ENCODE measurements at regions of chrX and their contacts with region 1.

Region 1: GRCh38 chrX:76454456-76454927 is 27.0 kb downstream of the MAGEE1 start:
- DNase-seq: no peak
- H3K4me3 ChIP-seq: no peak overlapping the region
- H3K27me3 ChIP-seq: no peaks in the 10 kb centered on the region
- CTCF ChIP-seq: peak; percentile 55

Region 2: DNA sequence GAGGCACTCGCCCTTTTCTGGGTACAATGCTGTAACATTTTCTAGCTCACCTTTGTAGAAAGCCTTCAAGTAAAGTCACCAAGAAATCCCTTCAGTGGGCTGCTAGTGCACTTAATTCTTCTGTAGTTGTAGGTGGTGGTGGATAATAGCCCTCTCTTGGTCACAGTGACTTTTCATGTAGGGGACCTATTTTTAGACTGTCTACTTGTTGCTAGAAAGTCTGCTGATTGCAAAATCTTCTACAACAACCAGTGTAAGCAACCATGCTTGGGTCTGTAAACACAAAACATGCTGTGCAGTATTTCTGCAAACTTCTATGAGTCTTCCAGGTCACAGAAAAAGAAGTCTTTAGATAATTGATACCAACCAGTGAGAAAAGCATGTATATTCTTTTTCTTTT is 226.0 kb before region 1 on chrX:
- CTCF ChIA-PET with region 1: no interaction called
- POLR2A ChIA-PET with region 1: no interaction called
- DNase-seq: no peak
- H3K4me3 ChIP-seq: no peak overlapping the region
- H3K27me3 ChIP-seq: no peaks in the 10 kb centered on the region
- CTCF ChIP-seq: no peak

Region 3: DNA sequence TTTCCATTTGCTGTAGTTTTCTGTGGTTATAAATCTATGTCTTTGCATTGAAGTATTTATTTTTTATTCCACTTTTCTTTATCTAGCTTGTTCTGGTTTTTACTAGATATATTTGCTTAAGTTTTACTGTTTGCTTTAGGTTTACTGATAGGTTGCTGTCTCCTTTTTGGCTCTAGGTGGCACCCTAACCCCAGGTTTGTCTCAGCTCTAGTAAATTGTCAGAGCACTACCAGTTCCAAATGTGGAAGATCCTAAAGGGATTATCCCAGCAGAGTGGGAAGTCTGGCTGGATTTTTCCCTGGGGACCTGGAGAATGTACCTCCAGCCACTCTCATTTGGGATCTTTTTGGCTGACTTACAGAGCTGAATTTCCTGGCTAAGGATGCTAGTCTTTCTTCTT is 175.5 kb before region 1 on chrX:
- CTCF ChIA-PET with region 1: interaction called, 18 read pairs
- POLR2A ChIA-PET with region 1: no interaction called
- DNase-seq: no peak
- H3K4me3 ChIP-seq: no peak overlapping the region
- H3K27me3 ChIP-seq: no peaks in the 10 kb centered on the region
- CTCF ChIP-seq: peak; percentile 59

Region 4: GRCh38 chrX:76439188-76439587 is 15.3 kb before region 1 on chrX:
- CTCF ChIA-PET with region 1: no interaction called
- POLR2A ChIA-PET with region 1: no interaction called
- DNase-seq: no peak
- H3K4me3 ChIP-seq: no peak overlapping the region
- H3K27me3 ChIP-seq: no peaks in the 10 kb centered on the region
- CTCF ChIP-seq: no peak

Region 5: GRCh38 chrX:77070202-77070918 is 615.9 kb after region 1 on chrX:
- CTCF ChIA-PET with region 1: no interaction called
- POLR2A ChIA-PET with region 1: no interaction called
- DNase-seq: no peak
- H3K4me3 ChIP-seq: no peak overlapping the region
- H3K27me3 ChIP-seq: no peaks in the 10 kb centered on the region
- CTCF ChIP-seq: no peak

Measured in BJ (cell line).